ENCODE measurements at regions of chr2 and their contacts with region 1.

Region 1: GRCh38 chr2:152740743-152741328 is 22.4 kb downstream of the ARL6IP6 start:
- DNase-seq: peak; percentile 49
- ATAC-seq: peak; percentile 64
- H3K4me3 ChIP-seq: no peak overlapping the region
- H3K27ac ChIP-seq: no peak overlapping the region
- H3K4me1 ChIP-seq: no peaks in the 10 kb centered on the region
- H3K27me3 ChIP-seq: no peaks in the 10 kb centered on the region
- CTCF ChIP-seq: peak; percentile 66 to 98 (median 84)
- POLR2A ChIP-seq: no peak
- RAD21 ChIP-seq: peak; percentile 82

Region 2: GRCh38 chr2:152036611-152037469 is 704.0 kb before region 1 on chr2:
- CTCF ChIA-PET with region 1: interaction called, 4 read pairs
- POLR2A ChIA-PET with region 1: no interaction called
- RAD21 ChIA-PET with region 1: no interaction called
- intact Hi-C with region 1: loop called (anchors 5 kb)
- DNase-seq: peak; percentile 61
- ATAC-seq: peak; percentile 94
- H3K4me3 ChIP-seq: no peak overlapping the region
- H3K27ac ChIP-seq: no peak overlapping the region
- H3K4me1 ChIP-seq: no peaks in the 10 kb centered on the region
- H3K27me3 ChIP-seq: no peaks in the 10 kb centered on the region
- CTCF ChIP-seq: peak; percentile 79 to 90 (median 79)
- POLR2A ChIP-seq: no peak
- RAD21 ChIP-seq: peak; percentile 93

Region 3: DNA sequence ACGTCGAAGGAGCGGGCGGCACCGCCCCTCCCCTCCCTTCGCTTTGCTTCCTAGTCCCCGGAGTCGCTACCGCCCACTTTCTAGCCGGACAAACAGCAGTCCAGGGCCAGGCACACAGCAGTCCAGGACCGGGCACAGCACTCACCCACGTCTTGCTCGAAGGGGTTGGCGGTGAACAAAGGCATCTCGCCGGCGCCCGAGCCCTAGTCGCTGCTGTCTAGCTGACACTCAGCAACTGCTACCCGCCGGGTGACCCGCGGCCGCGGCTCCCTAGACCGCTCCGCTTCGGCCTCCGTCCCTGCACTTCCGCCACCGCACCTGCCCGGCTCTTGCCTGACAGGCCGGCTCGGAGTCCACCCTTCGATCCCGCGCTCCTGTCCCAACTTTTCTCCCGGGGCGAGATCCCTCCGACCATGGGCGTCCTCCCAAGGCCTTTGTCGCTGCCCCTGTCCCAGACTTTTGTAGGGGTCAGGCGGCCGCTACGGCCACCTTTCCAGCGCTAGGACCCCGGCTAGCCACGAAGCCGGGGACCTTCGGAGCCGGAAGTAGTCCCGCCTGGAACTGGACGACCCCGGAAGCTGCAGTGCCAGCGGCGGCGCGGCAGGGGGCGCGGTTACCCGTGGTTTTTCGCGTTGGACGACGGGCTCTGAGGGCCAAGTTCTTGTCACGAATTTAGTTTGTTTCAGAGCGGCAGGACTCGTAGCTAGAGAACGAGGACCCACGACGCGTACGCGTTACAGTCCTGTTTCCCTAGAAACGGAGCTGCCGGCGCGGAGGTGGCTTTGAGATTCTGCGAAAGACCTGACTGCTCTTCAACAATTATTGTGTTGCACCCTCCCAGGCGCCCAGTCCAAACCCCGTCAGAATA is 565.1 kb before region 1 on chr2 and contains the start of gene STAM2:
- CTCF ChIA-PET with region 1: interaction called, 3 read pairs
- POLR2A ChIA-PET with region 1: no interaction called
- RAD21 ChIA-PET with region 1: no interaction called
- intact Hi-C with region 1: loop called (anchors 2 kb)
- DNase-seq: peak; percentile 79
- ATAC-seq: peak; percentile 87
- H3K4me3 ChIP-seq: peak within 1 kb of the TSS; percentile 91 to 93
- H3K27ac ChIP-seq: peak within 1 kb of the TSS; percentile 72
- H3K4me1 ChIP-seq: peaks cover 0 to 16% of the 10 kb centered on the region in 2 experiments; a peak in 3 of 4 replicates
- H3K27me3 ChIP-seq: no peaks in the 10 kb centered on the region
- CTCF ChIP-seq: peak; percentile 82 to 95 (median 93)
- POLR2A ChIP-seq: peak; percentile 38
- RAD21 ChIP-seq: peak; percentile 96
- total RNA-seq, gene STAM2: 19.2 TPM

Region 4: GRCh38 chr2:153478334-153479261 is 737.8 kb after region 1 on chr2 and contains the start of gene RPRM:
- CTCF ChIA-PET with region 1: no interaction called
- POLR2A ChIA-PET with region 1: no interaction called
- RAD21 ChIA-PET with region 1: no interaction called
- intact Hi-C with region 1: loop called (anchors 5 kb)
- DNase-seq: peak; percentile 29
- ATAC-seq: peak; percentile 98
- H3K4me3 ChIP-seq: peak within 1 kb of the TSS; percentile 38 to 54
- H3K27ac ChIP-seq: no peak within 1 kb of the TSS
- H3K4me1 ChIP-seq: peaks cover 0 to 10% of the 10 kb centered on the region in 2 experiments; a peak in 3 of 4 replicates
- H3K27me3 ChIP-seq: no peaks in the 10 kb centered on the region
- CTCF ChIP-seq: peak; percentile 48 to 94 (median 88); a peak in 5 of 6 replicates
- POLR2A ChIP-seq: no peak
- RAD21 ChIP-seq: peak; percentile 87
- total RNA-seq, gene RPRM: not detected

Region 5: GRCh38 chr2:153519257-153519875 is 778.5 kb after region 1 on chr2:
- CTCF ChIA-PET with region 1: interaction called, 3 read pairs
- POLR2A ChIA-PET with region 1: no interaction called
- RAD21 ChIA-PET with region 1: no interaction called
- intact Hi-C with region 1: loop called (anchors 5 kb)
- DNase-seq: peak; percentile 55
- ATAC-seq: peak; percentile 63
- H3K4me3 ChIP-seq: no peak overlapping the region
- H3K27ac ChIP-seq: no peak overlapping the region
- H3K4me1 ChIP-seq: no peaks in the 10 kb centered on the region
- H3K27me3 ChIP-seq: no peaks in the 10 kb centered on the region
- CTCF ChIP-seq: peak; percentile 58 to 82 (median 67)
- POLR2A ChIP-seq: no peak
- RAD21 ChIP-seq: peak; percentile 79